CD8-positive, alpha-beta T cell (primary cell): ENCODE measurements at regions of chr11 and their contacts with region 1.

Region 1: GRCh38 chr11:89015614-89016013 is 50.2 kb downstream of the GRM5 start:
- DNase-seq: no peak
- ATAC-seq: no peak
- H3K4me3 ChIP-seq: no peak overlapping the region
- H3K4me3 Mint-ChIP-seq: no peak overlapping the region
- H3K27ac ChIP-seq: no peak overlapping the region
- H3K27ac Mint-ChIP-seq: no peak overlapping the region
- H3K4me1 ChIP-seq: no peaks in the 10 kb centered on the region
- H3K4me1 Mint-ChIP-seq: no peaks in the 10 kb centered on the region
- H3K27me3 ChIP-seq: no peaks in the 10 kb centered on the region
- H3K27me3 Mint-ChIP-seq: no peaks in the 10 kb centered on the region
- CTCF ChIP-seq: no peak

Region 2: GRCh38 chr11:88501541-88501940 is 514.1 kb before region 1 on chr11:
- CTCF ChIA-PET with region 1: no interaction called
- POLR2A ChIA-PET with region 1: no interaction called
- intact Hi-C with region 1: loop called in 1 of 2 experiments (anchors 5 kb)
- DNase-seq: no peak
- ATAC-seq: no peak
- H3K4me3 ChIP-seq: no peak overlapping the region
- H3K4me3 Mint-ChIP-seq: no peak overlapping the region
- H3K27ac ChIP-seq: no peak overlapping the region
- H3K27ac Mint-ChIP-seq: no peak overlapping the region
- H3K4me1 ChIP-seq: no peaks in the 10 kb centered on the region
- H3K4me1 Mint-ChIP-seq: no peaks in the 10 kb centered on the region
- H3K27me3 ChIP-seq: no peaks in the 10 kb centered on the region
- H3K27me3 Mint-ChIP-seq: peaks cover 18% of the 10 kb centered on the region
- CTCF ChIP-seq: no peak

Region 3: DNA sequence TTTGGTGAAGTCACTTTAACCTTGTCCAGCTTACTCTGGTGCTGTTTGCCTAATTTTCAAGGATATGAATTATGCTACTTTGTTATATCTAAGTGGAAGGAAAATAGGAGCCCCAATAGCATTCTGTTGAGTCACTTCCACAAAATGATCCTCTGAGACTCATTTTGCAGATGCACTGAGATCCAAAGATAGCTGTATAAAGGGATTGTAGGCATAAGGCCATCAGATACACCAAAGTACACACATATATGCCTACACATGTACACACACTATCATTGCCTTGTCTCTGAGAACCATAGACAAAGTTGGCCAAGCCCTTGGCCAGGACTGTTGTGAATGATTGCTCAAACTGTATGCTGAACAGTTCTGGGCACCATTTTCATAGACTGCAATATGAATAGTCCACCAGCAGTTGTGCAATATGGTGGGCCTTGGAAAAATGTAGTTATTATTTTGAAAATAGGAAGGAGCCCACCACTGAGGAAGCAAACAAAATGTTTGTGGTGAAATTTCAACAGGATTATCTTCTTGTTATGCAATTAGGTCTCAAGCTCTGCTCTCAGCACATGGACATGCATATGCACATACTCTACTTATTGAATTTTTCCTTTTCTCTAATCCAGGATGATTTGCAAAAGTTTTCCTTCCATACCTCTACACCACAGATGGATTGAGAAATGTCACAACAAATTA is 492.1 kb before region 1 on chr11:
- CTCF ChIA-PET with region 1: no interaction called
- POLR2A ChIA-PET with region 1: no interaction called
- intact Hi-C with region 1: no loop called
- DNase-seq: no peak
- ATAC-seq: no peak
- H3K4me3 ChIP-seq: no peak overlapping the region
- H3K4me3 Mint-ChIP-seq: no peak overlapping the region
- H3K27ac ChIP-seq: no peak overlapping the region
- H3K27ac Mint-ChIP-seq: no peak overlapping the region
- H3K4me1 ChIP-seq: no peaks in the 10 kb centered on the region
- H3K4me1 Mint-ChIP-seq: no peaks in the 10 kb centered on the region
- H3K27me3 ChIP-seq: no peaks in the 10 kb centered on the region
- H3K27me3 Mint-ChIP-seq: peaks cover 3% of the 10 kb centered on the region
- CTCF ChIP-seq: no peak